T-cell (primary cell): ENCODE measurements at regions of chr10 and their contacts with region 1.

Region 1: DNA sequence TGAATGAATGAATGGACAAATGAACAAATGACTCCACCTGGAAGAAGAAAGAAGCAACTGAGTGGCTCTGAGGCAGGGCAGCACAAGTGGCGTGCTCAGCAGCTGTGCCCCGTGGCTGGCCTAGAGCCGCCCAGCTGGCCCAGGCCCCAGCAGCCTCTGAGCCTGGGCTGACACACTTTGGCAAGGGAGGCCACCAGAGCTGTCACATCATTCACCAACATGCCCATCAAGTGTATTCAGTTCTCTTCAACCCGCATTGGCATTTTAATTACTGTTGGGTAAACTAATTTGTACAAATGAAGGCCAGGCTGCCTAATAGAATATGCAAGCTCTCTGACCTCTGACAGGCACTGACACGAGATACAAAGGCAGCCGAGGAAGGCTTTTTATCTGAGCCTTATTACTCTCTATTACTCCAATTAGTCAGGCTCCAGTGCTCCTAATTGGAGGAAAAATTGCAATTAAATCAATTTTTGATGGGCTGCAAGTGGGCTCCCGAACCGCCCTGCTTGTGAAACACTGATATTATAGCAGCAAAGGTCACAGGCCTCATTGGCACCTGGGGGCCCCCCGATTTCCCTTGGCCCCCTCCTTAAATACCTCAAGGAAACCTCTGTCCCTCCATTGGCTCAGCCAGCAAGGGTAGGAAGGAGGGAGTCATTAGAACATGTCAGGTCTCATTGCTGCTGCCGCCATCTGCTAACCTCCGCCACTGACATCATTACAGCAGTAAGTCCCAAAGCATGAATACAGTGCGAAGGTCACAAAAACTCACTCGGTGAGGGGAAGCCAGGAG is 41.9 kb downstream of the DPCD start:
- DNase-seq: no peak
- ATAC-seq: no peak
- H3K4me3 ChIP-seq: no peak overlapping the region
- H3K4me3 Mint-ChIP-seq: no peak overlapping the region
- H3K27ac ChIP-seq: no peak overlapping the region
- H3K27ac Mint-ChIP-seq: no peak overlapping the region
- H3K4me1 ChIP-seq: peaks cover 0 to 4% of the 10 kb centered on the region in 2 experiments
- H3K4me1 Mint-ChIP-seq: peaks cover 19 to 29% (median 28%) of the 10 kb centered on the region in 3 donors
- H3K27me3 ChIP-seq: no peaks in the 10 kb centered on the region
- H3K27me3 Mint-ChIP-seq: no peaks in the 10 kb centered on the region

Region 2: GRCh38 chr10:101693978-101694673 is 64.1 kb after region 1 on chr10:
- CTCF ChIA-PET with region 1: interaction called in 1 of 2 experiments, 10 read pairs
- POLR2A ChIA-PET with region 1: interaction called in 1 of 2 experiments, 3 read pairs
- DNase-seq: peak; percentile 35 to 79 (median 63)
- ATAC-seq: peak; percentile 67 to 78 (median 74)
- H3K4me3 ChIP-seq: peak overlapping the region; percentile 85 to 93
- H3K4me3 Mint-ChIP-seq: peak overlapping the region; percentile 94 to 95 (median 94)
- H3K27ac ChIP-seq: peak overlapping the region; percentile 99
- H3K27ac Mint-ChIP-seq: peak overlapping the region; percentile 97 to 99
- H3K4me1 ChIP-seq: peaks cover 8 to 24% of the 10 kb centered on the region in 2 experiments
- H3K4me1 Mint-ChIP-seq: peaks cover 43 to 57% (median 52%) of the 10 kb centered on the region in 3 donors
- H3K27me3 ChIP-seq: no peaks in the 10 kb centered on the region
- H3K27me3 Mint-ChIP-seq: no peaks in the 10 kb centered on the region

Region 3: DNA sequence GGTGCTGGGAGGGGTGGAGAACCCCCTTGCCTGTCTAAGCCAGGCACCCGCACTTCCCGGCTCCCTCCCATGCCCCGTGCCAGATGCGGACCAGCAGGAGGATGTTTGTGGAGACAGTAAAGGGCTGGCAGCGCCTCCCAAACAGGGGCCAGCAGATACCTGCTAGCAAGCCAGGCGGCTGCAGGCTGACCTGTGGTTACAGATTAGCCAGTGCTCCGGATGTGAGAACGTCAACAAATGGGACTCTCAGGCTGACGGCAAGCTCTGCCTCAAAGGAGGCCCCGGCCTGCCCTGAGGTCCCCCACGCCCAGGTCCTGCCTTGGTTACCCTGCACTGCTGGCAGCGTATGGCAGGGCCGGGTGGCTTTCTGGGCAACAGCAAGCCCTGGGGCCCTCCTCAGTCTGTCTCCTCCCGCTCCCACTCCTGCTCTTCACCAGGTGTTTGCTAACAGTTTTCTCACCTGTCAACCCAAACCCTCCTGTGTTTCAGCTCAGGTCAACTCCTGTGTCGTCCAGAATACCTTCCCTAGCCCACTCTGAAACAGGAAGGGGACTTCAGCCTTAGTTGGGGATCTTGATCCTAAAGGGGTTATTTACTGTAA is 1948.8 kb after region 1 on chr10:
- CTCF ChIA-PET with region 1: no interaction called
- POLR2A ChIA-PET with region 1: interaction called in 1 of 2 experiments, 13 read pairs
- DNase-seq: no peak
- ATAC-seq: peak in 2 of 4 experiments; percentile 54 to 73
- H3K4me3 ChIP-seq: no peak overlapping the region
- H3K4me3 Mint-ChIP-seq: no peak overlapping the region
- H3K27ac ChIP-seq: no peak overlapping the region
- H3K27ac Mint-ChIP-seq: no peak overlapping the region
- H3K4me1 ChIP-seq: peaks cover 3 to 7% of the 10 kb centered on the region in 2 experiments
- H3K4me1 Mint-ChIP-seq: peaks cover 9 to 10% (median 9%) of the 10 kb centered on the region in 3 donors
- H3K27me3 ChIP-seq: peaks cover 0 to 10% of the 10 kb centered on the region in 2 experiments
- H3K27me3 Mint-ChIP-seq: peaks cover 2 to 3% of the 10 kb centered on the region in 2 donors